AG04449 (cell line): ENCODE measurements at regions of chr1 and their contacts with region 1.

Region 1: DNA sequence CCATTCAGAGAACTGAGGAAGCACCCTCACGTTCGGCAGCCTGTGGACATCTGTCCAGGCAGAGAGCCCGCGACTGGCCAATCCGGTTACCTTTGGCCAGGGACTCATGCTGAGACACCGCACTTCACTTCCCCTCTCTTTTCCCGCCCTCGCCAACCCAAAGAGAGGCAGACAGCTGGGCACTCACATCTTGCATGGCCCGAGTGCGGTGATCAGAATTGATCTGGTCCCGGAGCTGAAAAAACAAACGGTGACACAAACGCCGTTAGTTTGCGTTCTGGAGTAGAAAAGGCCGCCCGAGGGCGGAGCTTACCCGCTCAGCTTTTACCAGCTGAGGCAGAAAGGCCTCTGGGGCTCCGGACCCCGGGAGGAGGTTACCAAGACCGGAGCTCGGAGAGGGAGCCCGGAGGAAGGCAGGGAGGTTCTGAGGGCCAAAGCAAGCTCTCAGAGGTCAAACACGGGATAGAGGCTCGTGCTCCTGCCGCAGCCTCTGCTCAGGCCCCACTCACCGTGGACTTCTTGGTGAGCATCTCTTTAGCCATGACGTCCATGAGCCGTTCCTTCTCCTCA is 376 bp downstream of the SF3A3 start:
- DNase-seq: no peak
- H3K4me3 ChIP-seq: peak overlapping the region; percentile 100
- CTCF ChIP-seq: no peak

Region 2: GRCh38 chr1:37999430-38000232 is 10.2 kb after region 1 on chr1:
- CTCF ChIA-PET with region 1: interaction called, 68 read pairs
- POLR2A ChIA-PET with region 1: interaction called, 6 read pairs
- DNase-seq: no peak
- H3K4me3 ChIP-seq: peak overlapping the region; percentile 36
- CTCF ChIP-seq: no peak

Region 3: GRCh38 chr1:38834937-38835827 is 845.7 kb after region 1 on chr1:
- CTCF ChIA-PET with region 1: interaction called, 45 read pairs
- POLR2A ChIA-PET with region 1: interaction called, 3 read pairs
- DNase-seq: peak; percentile 47
- H3K4me3 ChIP-seq: no peak overlapping the region
- CTCF ChIP-seq: peak; percentile 69